CD8-positive, alpha-beta T cell (primary cell): ENCODE measurements at regions of chr3 and their contacts with region 1.

Region 1: DNA sequence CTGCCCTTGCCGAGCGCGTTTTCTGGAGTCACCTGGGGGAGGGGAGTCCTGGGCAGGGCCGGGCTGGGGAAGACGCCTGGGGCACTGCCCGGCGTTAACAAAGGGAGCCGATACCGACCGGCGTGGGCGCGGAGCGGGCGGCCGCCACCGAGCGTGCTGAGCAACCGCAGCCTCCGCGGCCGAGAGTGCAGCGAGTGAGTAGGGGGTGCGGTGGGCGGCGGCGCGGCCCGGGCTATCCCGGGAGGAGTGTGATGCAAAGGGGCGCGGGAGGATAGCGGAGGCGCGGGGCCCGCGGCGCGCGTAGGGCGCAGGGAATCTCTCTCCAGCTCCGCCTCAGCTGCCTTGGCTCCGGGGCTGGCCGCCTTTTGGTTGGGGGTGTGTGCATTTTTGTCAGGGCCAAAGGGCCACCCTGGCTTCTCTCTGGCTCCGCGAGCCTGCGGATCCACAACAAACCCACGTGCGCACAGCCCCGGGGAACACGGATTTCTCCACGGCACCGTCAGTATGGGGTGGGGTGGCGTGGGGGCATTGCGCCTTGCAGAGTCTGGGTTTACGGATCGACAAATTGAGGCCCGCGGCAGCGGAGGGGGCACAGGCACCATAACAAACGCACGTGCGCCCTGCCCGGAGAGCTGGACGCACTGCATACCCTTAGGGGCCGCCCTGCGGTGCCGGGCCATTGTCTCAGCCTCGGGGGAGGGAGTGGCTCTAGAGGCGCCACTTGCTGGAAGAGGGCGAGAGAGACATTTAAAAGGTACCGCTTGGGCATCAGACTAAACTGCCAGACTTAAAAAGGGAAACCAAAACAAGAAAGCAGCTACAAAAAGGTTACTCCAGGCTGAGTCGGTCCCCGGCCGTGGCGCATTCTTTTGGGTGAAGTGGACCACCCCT is 560 bp downstream of the ST6GAL1 start:
- DNase-seq: peak; percentile 23 to 88 (median 72)
- ATAC-seq: peak; percentile 77
- H3K4me3 ChIP-seq: peak overlapping the region; percentile 83 to 94
- H3K4me3 Mint-ChIP-seq: peak overlapping the region; percentile 99
- H3K27ac ChIP-seq: peak overlapping the region; percentile 81 to 83
- H3K27ac Mint-ChIP-seq: peak overlapping the region; percentile 95
- H3K4me1 ChIP-seq: peaks cover 17% of the 10 kb centered on the region
- H3K4me1 Mint-ChIP-seq: peaks cover 38% of the 10 kb centered on the region
- H3K27me3 ChIP-seq: no peaks in the 10 kb centered on the region
- H3K27me3 Mint-ChIP-seq: no peaks in the 10 kb centered on the region
- CTCF ChIP-seq: no peak

Region 2: DNA sequence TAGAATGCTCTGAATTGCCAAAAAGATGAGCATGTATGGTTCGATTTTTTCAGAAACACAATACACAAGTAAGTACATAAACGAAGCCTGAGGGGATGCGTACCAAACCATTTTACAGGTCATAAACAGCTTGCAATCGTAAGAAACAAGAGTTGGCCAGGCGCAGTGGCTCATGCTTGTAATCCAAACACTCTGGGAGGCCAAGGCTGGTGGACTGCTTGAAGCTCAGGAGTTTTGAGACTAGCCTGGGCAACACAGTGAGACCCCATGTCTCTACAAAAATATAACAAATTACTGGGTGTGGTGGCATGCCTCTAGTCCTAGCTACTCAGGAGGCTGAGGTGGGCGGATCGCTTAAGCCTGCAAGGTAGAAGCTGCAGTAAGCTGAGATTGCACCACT is 1006.5 kb before region 1 on chr3:
- CTCF ChIA-PET with region 1: no interaction called
- POLR2A ChIA-PET with region 1: no interaction called
- intact Hi-C with region 1: loop called in 1 of 2 experiments (anchors 2 kb)
- DNase-seq: peak in 1 of 9 experiments; percentile 8
- ATAC-seq: no peak
- H3K4me3 ChIP-seq: no peak overlapping the region
- H3K4me3 Mint-ChIP-seq: no peak overlapping the region
- H3K27ac ChIP-seq: no peak overlapping the region
- H3K27ac Mint-ChIP-seq: no peak overlapping the region
- H3K4me1 ChIP-seq: peaks cover 36% of the 10 kb centered on the region
- H3K4me1 Mint-ChIP-seq: peaks cover 63% of the 10 kb centered on the region
- H3K27me3 ChIP-seq: no peaks in the 10 kb centered on the region
- H3K27me3 Mint-ChIP-seq: no peaks in the 10 kb centered on the region
- CTCF ChIP-seq: no peak

Region 3: GRCh38 chr3:186826976-186827731 is 103.7 kb before region 1 on chr3:
- CTCF ChIA-PET with region 1: interaction called, 4 read pairs
- POLR2A ChIA-PET with region 1: interaction called, 4 read pairs
- intact Hi-C with region 1: loop called in 1 of 2 experiments (anchors 1 kb)
- DNase-seq: peak; percentile 59 to 95 (median 83)
- ATAC-seq: peak; percentile 93
- H3K4me3 ChIP-seq: peak overlapping the region; percentile 56 to 70
- H3K4me3 Mint-ChIP-seq: peak overlapping the region; percentile 75
- H3K27ac ChIP-seq: no peak overlapping the region
- H3K27ac Mint-ChIP-seq: no peak overlapping the region
- H3K4me1 ChIP-seq: peaks cover 21% of the 10 kb centered on the region
- H3K4me1 Mint-ChIP-seq: peaks cover 24% of the 10 kb centered on the region
- H3K27me3 ChIP-seq: peaks cover 14 to 26% of the 10 kb centered on the region in 2 experiments
- H3K27me3 Mint-ChIP-seq: peaks cover 50% of the 10 kb centered on the region
- CTCF ChIP-seq: no peak

Region 4: GRCh38 chr3:186915806-186916796 is 14.8 kb before region 1 on chr3:
- CTCF ChIA-PET with region 1: interaction called, 27 read pairs
- POLR2A ChIA-PET with region 1: interaction called, 18 read pairs
- intact Hi-C with region 1: no loop called
- DNase-seq: peak in 3 of 9 experiments; percentile 23 to 53 (median 50)
- ATAC-seq: peak; percentile 48
- H3K4me3 ChIP-seq: peak overlapping the region in 1 of 2 experiments; percentile 9
- H3K4me3 Mint-ChIP-seq: peak overlapping the region; percentile 50
- H3K27ac ChIP-seq: no peak overlapping the region
- H3K27ac Mint-ChIP-seq: peak overlapping the region; percentile 78
- H3K4me1 ChIP-seq: peaks cover 32% of the 10 kb centered on the region
- H3K4me1 Mint-ChIP-seq: peaks cover 40% of the 10 kb centered on the region
- H3K27me3 ChIP-seq: no peaks in the 10 kb centered on the region
- H3K27me3 Mint-ChIP-seq: no peaks in the 10 kb centered on the region
- CTCF ChIP-seq: no peak

Region 5: GRCh38 chr3:187066228-187066995 is 135.5 kb after region 1 on chr3:
- CTCF ChIA-PET with region 1: interaction called, 8 read pairs
- POLR2A ChIA-PET with region 1: interaction called, 3 read pairs
- intact Hi-C with region 1: loop called in 1 of 2 experiments (anchors 5 kb)
- DNase-seq: peak; percentile 15 to 80 (median 54)
- ATAC-seq: peak; percentile 92
- H3K4me3 ChIP-seq: no peak overlapping the region
- H3K4me3 Mint-ChIP-seq: no peak overlapping the region
- H3K27ac ChIP-seq: no peak overlapping the region
- H3K27ac Mint-ChIP-seq: peak overlapping the region; percentile 94
- H3K4me1 ChIP-seq: peaks cover 35% of the 10 kb centered on the region
- H3K4me1 Mint-ChIP-seq: peaks cover 64% of the 10 kb centered on the region
- H3K27me3 ChIP-seq: no peaks in the 10 kb centered on the region
- H3K27me3 Mint-ChIP-seq: no peaks in the 10 kb centered on the region
- CTCF ChIP-seq: peak; percentile 44

Region 6: DNA sequence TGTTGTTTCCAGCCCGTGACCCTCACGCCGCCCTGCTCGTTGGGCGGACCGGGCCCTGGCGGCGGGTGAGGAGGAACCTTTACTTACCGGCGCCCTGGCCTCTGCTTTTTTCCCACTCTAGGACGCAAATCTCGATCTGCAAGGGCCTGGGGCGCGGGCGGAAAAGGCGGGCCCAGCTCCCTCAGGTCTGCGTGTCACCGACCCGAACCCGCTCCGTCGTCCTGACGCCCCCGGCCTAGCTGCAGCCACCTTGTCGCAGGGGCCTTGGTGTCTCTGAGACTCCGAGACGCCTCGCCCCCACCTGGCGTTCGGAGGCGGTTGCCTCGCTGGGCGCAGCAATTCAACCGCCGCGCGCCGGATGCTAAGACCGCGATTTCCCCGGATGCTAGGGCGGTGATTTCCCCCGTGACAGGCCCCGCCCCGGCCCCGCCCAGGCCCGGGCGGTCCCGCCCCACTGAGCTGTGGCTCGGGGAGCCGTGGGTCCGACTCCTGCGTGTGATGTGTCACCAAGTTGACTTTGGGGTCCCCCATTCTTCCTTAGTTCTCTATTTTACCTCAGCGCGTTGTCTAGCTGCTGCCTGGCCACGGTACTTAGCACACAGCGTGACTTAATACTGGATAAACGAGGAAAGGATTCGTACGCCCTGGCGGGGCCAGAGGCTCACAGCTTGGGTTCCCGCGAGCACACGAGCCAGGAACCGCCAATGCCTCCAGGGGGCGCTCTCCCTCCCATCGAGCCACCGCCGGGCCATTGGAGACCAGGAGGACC is 208.4 kb after region 1 on chr3 and contains the start of gene RPL39L:
- CTCF ChIA-PET with region 1: no interaction called
- POLR2A ChIA-PET with region 1: no interaction called
- intact Hi-C with region 1: loop called (anchors 5 kb)
- DNase-seq: peak; percentile 88 to 97 (median 92)
- ATAC-seq: peak; percentile 96
- H3K4me3 ChIP-seq: peak within 1 kb of the TSS; percentile 65 to 77
- H3K4me3 Mint-ChIP-seq: peak within 1 kb of the TSS; percentile 92
- H3K27ac ChIP-seq: peak within 1 kb of the TSS; percentile 69 to 83
- H3K27ac Mint-ChIP-seq: peak within 1 kb of the TSS; percentile 95
- H3K4me1 ChIP-seq: peaks cover 11% of the 10 kb centered on the region
- H3K4me1 Mint-ChIP-seq: peaks cover 19% of the 10 kb centered on the region
- H3K27me3 ChIP-seq: no peaks in the 10 kb centered on the region
- H3K27me3 Mint-ChIP-seq: no peaks in the 10 kb centered on the region
- CTCF ChIP-seq: peak; percentile 70
- total RNA-seq, gene RPL39L: 0.65 to 0.94 TPM